Endothelial cell of umbilical vein (primary cell): ENCODE measurements at regions of chr19 and their contacts with region 1.

Region 1: DNA sequence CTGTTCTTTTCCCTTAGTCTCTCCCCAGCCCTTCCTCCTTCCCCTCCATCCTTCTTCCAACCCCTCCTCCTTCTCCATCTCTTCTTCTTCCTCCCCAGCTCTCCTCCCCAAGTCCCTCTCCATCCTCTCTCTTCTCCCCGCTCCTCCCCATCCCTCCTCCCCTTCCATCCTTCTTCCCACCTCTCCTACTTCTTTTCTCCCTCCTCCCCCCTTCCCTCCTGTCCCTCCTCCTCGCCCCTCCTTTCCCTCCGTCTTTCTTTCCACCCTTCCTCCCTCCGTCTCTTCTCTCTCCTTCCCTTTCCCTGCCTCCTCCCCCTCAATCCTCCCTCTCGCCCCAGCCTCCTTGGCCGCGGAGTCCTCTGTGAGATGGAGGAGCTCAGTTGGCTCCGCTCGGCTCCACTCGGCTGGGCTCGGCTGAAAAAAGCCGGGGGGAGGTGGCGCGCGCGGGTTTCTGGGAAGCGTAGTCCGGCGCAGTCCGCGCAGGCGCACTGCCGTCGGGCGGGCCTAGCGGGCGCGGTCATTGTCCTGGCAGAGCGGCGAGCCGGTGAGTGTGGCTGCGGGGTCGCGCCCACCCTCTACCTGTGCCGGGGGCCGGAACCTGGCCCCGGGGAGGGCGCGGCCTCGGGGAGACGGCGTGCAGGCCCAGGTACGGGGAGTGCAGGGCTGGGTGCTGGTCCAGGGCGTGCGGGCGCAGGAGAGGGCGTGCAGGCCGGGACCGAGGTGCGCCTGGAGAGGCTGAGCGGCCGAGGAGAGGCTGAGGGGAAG is at the start of gene ZNF71:
- DNase-seq: peak; percentile 86
- H3K4me3 ChIP-seq: peak within 1 kb of the TSS; percentile 28 to 94 (median 67)
- H3K27ac ChIP-seq: no peak within 1 kb of the TSS
- H3K4me1 ChIP-seq: peaks cover 9% of the 10 kb centered on the region
- H3K27me3 ChIP-seq: no peaks in the 10 kb centered on the region
- CTCF ChIP-seq: no peak
- POLR2A ChIP-seq: no peak
- total RNA-seq, gene ZNF71: 9.6 and 9.7 TPM in 2 replicates

Region 2: GRCh38 chr19:56608274-56608964 is 13.5 kb after region 1 on chr19:
- CTCF ChIA-PET with region 1: no interaction called
- POLR2A ChIA-PET with region 1: no interaction called
- dilution Hi-C with region 1: no loop called
- intact Hi-C with region 1: no loop called
- DNase-seq: peak; percentile 9
- H3K4me3 ChIP-seq: no peak overlapping the region
- H3K27ac ChIP-seq: no peak overlapping the region
- H3K4me1 ChIP-seq: no peaks in the 10 kb centered on the region
- H3K27me3 ChIP-seq: no peaks in the 10 kb centered on the region
- CTCF ChIP-seq: no peak
- POLR2A ChIP-seq: no peak

Region 3: DNA sequence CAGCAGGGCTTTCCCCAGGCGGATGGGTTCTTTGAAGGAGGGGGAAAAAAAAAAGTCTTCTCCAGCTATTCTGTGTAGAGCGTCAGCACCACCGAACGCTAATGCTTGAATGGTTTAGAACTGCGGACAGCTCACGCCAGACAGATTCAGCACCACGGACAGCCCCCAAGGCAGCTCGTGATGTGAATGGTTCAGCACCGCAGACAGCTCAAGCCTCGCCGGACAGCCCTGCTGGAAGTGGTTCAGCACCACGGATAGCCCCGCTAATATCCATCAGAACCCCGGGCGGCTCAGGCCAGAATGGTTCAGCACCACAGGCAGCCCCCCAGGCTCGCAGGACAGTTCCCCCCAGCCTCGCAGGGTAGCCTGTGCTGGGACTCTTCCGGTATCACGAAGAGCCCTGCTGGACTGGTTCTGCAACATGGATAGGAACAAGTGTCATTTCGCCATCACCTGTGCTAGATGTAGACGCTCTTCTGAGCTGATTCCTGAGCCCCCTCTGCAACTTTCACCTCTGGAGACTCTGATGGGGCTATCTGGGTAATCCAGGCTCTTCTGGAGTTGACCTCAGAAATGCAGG is 43.1 kb after region 1 on chr19:
- CTCF ChIA-PET with region 1: no interaction called
- POLR2A ChIA-PET with region 1: interaction called, 12 read pairs
- dilution Hi-C with region 1: no loop called
- intact Hi-C with region 1: no loop called
- DNase-seq: peak; percentile 53
- H3K4me3 ChIP-seq: no peak overlapping the region
- H3K27ac ChIP-seq: no peak overlapping the region
- H3K4me1 ChIP-seq: no peaks in the 10 kb centered on the region
- H3K27me3 ChIP-seq: no peaks in the 10 kb centered on the region
- CTCF ChIP-seq: no peak
- POLR2A ChIP-seq: no peak

Region 4: DNA sequence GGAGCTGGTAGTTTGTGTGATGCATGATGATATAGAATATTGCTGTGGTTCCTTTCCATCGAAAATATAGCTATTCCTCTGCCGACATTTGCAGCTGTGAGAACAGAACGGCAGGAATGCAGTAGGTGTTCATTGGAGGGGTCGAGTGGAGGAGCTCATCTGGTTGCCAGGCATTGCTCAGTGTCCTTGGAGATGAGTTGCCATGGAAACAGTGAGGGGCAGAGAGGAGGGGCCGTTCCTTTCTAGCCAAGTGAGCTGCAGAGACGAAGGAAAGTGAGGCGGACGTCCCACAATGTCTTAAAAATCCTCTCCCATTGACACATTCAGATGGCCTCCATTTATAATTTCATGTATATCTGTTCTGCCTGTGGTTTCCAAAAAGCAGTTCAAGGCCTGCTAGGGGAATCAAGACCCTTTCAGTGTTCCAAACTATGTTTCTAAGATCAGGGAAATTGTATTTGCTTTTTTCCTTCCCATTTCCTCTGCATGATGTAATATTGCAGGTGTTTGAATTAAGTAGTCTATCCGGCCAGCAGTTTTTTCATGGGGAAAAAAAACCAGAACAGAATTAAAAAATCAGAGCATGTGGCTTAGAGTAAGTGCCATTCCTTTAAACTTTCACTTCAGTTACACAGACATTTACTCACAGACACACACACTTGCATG is 117.8 kb after region 1 on chr19:
- CTCF ChIA-PET with region 1: no interaction called
- POLR2A ChIA-PET with region 1: no interaction called
- dilution Hi-C with region 1: no loop called
- intact Hi-C with region 1: no loop called
- DNase-seq: no peak
- H3K4me3 ChIP-seq: no peak overlapping the region
- H3K27ac ChIP-seq: no peak overlapping the region
- H3K4me1 ChIP-seq: no peaks in the 10 kb centered on the region
- H3K27me3 ChIP-seq: no peaks in the 10 kb centered on the region
- CTCF ChIP-seq: no peak
- POLR2A ChIP-seq: no peak